ENCODE measurements at regions of chr14 and their contacts with region 1.

Region 1: DNA sequence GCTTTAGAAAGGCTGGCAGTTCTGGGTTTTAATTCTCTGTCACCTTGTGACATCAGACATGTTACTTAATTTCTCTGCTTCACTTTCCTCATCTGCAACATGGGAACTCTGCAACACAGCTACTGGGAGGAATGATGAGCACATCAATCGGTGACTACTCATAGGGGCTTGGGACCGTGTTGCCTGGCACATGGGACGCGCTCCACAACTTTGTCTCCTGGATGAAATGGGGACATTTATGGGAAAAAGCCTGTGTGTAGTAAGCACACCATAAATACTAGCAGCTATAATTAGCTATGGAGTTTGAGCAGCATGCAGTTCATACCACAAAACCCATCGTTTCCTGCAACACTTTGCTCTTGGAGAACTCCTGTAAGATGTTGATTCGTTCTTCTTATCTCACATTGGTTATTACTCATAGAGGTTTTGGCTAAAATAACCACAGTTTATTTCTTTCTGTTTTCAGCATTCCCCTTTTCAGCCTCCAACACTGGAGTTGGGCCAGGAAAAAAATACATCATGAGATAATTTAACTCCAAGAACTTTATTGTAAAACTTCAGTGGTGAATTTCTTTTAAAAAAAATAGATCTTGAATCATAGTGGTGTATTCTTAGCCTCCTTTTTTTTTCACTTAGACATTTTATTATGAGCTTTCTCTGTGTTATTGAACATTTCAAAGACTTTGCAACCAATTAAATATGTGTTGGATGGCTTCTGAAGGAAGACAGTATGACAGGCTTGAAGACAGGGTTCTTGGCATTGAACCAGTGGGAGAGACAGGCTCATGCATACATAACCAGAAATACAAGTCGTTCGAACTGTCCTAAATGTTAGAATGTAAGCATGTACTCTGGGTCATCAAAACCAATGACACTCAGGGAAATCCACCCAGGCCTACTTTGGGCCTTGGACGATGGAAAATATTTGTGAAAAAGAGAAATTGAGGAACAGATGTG is 72.7 kb downstream of the RIN3 start:
- DNase-seq: peak; percentile 74
- ATAC-seq: peak; percentile 74
- H3K4me3 Mint-ChIP-seq: peak overlapping the region; percentile 58
- H3K27ac Mint-ChIP-seq: peak overlapping the region; percentile 86
- H3K4me1 Mint-ChIP-seq: peaks cover 95% of the 10 kb centered on the region
- H3K27me3 Mint-ChIP-seq: no peaks in the 10 kb centered on the region

Region 2: GRCh38 chr14:92154283-92154942 is 431.8 kb before region 1 on chr14:
- CTCF ChIA-PET with region 1: no interaction called
- POLR2A ChIA-PET with region 1: no interaction called
- DNase-seq: no peak
- ATAC-seq: no peak
- H3K4me3 Mint-ChIP-seq: no peak overlapping the region
- H3K27ac Mint-ChIP-seq: no peak overlapping the region
- H3K4me1 Mint-ChIP-seq: peaks cover 8% of the 10 kb centered on the region
- H3K27me3 Mint-ChIP-seq: no peaks in the 10 kb centered on the region

Region 3: GRCh38 chr14:92551044-92551841 is 35.0 kb before region 1 on chr14:
- CTCF ChIA-PET with region 1: interaction called, 16 read pairs
- POLR2A ChIA-PET with region 1: interaction called, 3 read pairs
- DNase-seq: peak; percentile 55
- ATAC-seq: peak; percentile 16
- H3K4me3 Mint-ChIP-seq: no peak overlapping the region
- H3K27ac Mint-ChIP-seq: peak overlapping the region; percentile 4
- H3K4me1 Mint-ChIP-seq: peaks cover 71% of the 10 kb centered on the region
- H3K27me3 Mint-ChIP-seq: no peaks in the 10 kb centered on the region

Region 4: DNA sequence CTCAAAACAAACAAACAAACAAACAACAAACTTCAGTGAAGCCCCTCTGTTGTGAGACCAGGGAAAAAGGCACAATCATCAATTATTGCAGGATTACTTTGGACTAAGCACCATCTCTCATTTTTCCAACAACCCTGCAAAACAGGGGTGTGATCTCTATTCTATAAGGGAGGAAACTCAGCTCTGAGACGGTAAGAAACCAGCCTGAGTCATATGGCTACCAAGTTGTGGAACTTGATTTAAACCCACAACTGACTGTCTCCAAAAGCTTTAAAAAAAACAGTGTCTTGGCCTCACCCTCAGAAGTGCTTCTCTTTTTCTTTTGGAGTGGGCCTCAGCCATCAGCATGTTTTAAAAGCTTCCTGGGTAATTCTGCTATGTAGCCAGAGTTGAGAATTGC is 22.9 kb before region 1 on chr14:
- CTCF ChIA-PET with region 1: interaction called, 70 read pairs
- POLR2A ChIA-PET with region 1: interaction called, 6 read pairs
- DNase-seq: peak; percentile 61
- ATAC-seq: peak; percentile 81
- H3K4me3 Mint-ChIP-seq: no peak overlapping the region
- H3K27ac Mint-ChIP-seq: peak overlapping the region; percentile 69
- H3K4me1 Mint-ChIP-seq: peaks cover 78% of the 10 kb centered on the region
- H3K27me3 Mint-ChIP-seq: no peaks in the 10 kb centered on the region

Region 5: DNA sequence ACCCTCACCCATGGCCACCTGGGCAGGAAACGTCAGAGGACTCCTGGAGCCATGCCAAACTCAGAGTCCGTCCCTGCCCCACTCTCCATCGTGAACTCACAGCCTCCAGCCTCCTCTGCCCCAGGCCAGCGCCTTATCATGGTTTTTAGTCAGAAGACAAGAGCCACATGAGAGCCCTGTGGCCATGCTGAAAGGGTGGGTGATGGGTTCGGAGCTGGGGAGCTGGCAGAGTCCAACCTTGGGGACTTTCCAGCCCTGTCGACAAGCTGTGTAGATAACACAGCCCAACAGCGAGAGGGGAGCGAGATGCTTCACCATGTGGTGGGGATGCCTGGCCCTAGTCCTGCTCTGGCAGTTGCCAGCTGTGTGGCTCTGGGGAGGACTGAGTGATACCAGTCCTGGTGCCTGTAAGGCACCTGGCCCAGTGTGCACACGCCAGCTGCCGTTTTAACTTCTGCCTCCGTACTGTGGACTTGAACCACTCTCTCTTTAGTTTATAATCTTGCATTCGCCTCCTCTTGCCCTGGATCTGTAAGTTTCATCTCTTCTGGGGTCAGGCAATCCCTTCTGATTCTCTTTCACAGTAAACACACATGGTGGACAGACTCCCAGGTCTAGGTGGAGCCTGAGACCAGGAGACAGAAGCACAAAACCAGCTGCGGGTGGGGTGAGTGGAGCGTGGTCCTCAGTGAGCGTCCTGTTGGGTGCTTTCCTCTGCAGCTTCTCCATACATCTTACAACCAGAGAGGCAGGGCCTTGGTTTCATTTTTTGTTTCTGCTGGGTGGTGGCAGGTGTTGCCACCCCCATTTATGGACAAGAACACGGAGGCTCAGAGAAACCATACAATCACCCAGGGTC is 17.4 kb before region 1 on chr14:
- CTCF ChIA-PET with region 1: interaction called, 70 read pairs
- POLR2A ChIA-PET with region 1: interaction called, 10 read pairs
- DNase-seq: peak; percentile 68
- ATAC-seq: peak; percentile 85
- H3K4me3 Mint-ChIP-seq: peak overlapping the region; percentile 67
- H3K27ac Mint-ChIP-seq: peak overlapping the region; percentile 95
- H3K4me1 Mint-ChIP-seq: peaks cover 80% of the 10 kb centered on the region
- H3K27me3 Mint-ChIP-seq: no peaks in the 10 kb centered on the region

Region 6: GRCh38 chr14:92596331-92596911 is 10.2 kb after region 1 on chr14:
- CTCF ChIA-PET with region 1: interaction called, 20 read pairs
- POLR2A ChIA-PET with region 1: interaction called, 3 read pairs
- DNase-seq: no peak
- ATAC-seq: no peak
- H3K4me3 Mint-ChIP-seq: no peak overlapping the region
- H3K27ac Mint-ChIP-seq: no peak overlapping the region
- H3K4me1 Mint-ChIP-seq: peaks cover 37% of the 10 kb centered on the region
- H3K27me3 Mint-ChIP-seq: no peaks in the 10 kb centered on the region

Region 7: DNA sequence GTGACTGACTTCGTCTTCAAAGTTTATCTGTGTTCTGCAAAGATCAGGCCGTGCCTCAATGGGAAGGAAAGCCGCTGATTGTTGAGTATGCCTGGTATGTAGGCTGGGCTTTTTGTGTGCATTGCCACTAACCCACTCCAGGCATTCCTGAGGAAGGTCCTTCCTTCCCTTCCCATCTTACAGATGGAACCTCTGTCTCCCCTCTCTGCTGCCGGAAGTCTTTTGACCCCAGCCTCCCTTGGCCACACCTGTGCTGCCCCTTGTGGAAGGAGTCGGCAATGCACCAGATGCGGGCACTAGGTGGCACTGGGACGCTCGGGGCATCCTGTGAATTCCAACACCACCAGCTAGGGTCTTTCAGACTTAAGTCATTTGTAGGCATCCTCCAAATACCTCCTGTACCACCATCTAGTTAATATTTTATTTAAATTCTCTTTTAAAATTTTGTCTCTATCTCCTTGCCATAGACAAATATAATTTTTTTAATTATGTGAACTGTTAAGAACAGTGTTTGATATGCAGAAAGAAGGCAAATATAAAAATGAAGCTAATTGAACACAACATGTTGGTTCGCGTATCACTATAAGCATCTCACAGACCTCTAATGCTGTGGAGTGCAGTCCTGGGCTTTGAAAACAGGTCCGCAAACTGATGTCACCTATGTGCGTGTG is 26.9 kb after region 1 on chr14:
- CTCF ChIA-PET with region 1: interaction called, 10 read pairs
- POLR2A ChIA-PET with region 1: interaction called, 3 read pairs
- DNase-seq: peak; percentile 59
- ATAC-seq: no peak
- H3K4me3 Mint-ChIP-seq: no peak overlapping the region
- H3K27ac Mint-ChIP-seq: peak overlapping the region; percentile 22
- H3K4me1 Mint-ChIP-seq: peaks cover 74% of the 10 kb centered on the region
- H3K27me3 Mint-ChIP-seq: no peaks in the 10 kb centered on the region

Region 8: DNA sequence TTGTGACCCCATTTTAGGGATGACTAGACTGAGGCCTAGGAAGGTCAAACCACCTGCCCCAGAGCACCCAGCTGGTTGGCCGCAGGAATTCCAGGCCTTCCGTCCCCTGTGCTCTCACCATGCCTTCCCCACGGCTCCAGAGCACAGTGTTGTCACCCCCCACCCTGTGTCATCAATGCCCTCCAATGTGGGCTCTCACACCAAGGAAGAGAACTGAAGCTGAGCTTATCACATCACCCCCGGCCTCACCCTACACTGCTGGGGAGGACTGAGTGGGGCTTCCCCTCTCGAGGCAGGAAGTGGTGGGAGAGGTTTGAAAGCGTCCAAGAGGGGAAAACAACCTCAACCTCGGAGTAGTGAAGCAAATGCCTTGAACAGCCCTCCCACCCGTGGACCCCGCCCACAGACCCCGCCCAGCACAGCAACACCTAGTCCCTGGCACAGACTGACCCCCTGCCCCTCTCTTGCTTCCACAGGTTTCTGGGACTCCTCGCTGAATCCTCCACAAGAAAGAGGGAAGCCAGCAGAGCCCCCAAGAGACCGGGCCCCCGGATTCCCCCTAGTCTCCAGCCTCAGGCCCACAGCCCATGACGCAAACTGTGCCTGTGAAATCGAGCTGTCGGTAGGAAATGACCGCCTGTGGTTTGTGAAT is 65.0 kb after region 1 on chr14:
- CTCF ChIA-PET with region 1: interaction called, 18 read pairs
- POLR2A ChIA-PET with region 1: interaction called, 8 read pairs
- DNase-seq: peak; percentile 92
- ATAC-seq: peak; percentile 79
- H3K4me3 Mint-ChIP-seq: peak overlapping the region; percentile 99
- H3K27ac Mint-ChIP-seq: peak overlapping the region; percentile 99
- H3K4me1 Mint-ChIP-seq: peaks cover 89% of the 10 kb centered on the region
- H3K27me3 Mint-ChIP-seq: no peaks in the 10 kb centered on the region